ENCODE measurements at regions of chr14 and their contacts with region 1.

Region 1: GRCh38 chr14:54730156-54730961 is 163.4 kb downstream of the SAMD4A start:
- DNase-seq: peak; percentile 63
- H3K4me3 Mint-ChIP-seq: peak overlapping the region; percentile 38
- H3K27ac Mint-ChIP-seq: peak overlapping the region; percentile 90
- H3K4me1 Mint-ChIP-seq: peaks cover 38% of the 10 kb centered on the region
- H3K27me3 Mint-ChIP-seq: peaks cover 12% of the 10 kb centered on the region

Region 2: GRCh38 chr14:54627540-54628363 is 102.6 kb before region 1 on chr14:
- CTCF ChIA-PET with region 1: interaction called, 3 read pairs
- POLR2A ChIA-PET with region 1: no interaction called
- intact Hi-C with region 1: loop called (anchors 1 kb)
- DNase-seq: peak; percentile 49
- H3K4me3 Mint-ChIP-seq: peak overlapping the region; percentile 55
- H3K27ac Mint-ChIP-seq: peak overlapping the region; percentile 78
- H3K4me1 Mint-ChIP-seq: peaks cover 40% of the 10 kb centered on the region
- H3K27me3 Mint-ChIP-seq: no peaks in the 10 kb centered on the region

Region 3: DNA sequence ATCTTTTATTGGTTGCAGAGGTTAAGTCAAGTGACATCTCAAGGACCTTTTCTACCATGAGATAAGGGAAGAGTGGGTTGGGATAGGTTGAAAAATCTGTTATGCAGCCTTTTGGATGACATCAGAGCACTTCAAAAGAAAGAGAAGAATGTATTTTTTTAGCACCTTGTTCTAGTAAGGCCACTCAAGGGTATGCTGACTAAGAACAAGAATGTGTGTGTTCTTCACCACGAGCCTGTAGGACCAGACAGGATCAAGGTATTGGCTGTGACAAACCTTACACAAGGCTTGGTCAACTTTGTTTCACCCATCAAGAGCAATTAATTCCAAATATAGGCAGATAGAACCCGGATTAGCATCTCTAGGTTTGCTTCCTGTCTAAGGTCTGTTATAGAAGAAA is 20.9 kb before region 1 on chr14:
- CTCF ChIA-PET with region 1: interaction called, 4 read pairs
- POLR2A ChIA-PET with region 1: no interaction called
- intact Hi-C with region 1: loop called (anchors 2 kb)
- DNase-seq: no peak
- H3K4me3 Mint-ChIP-seq: no peak overlapping the region
- H3K27ac Mint-ChIP-seq: no peak overlapping the region
- H3K4me1 Mint-ChIP-seq: peaks cover 17% of the 10 kb centered on the region
- H3K27me3 Mint-ChIP-seq: no peaks in the 10 kb centered on the region

Region 4: GRCh38 chr14:54796961-54797360 is 66.6 kb after region 1 on chr14:
- CTCF ChIA-PET with region 1: no interaction called
- POLR2A ChIA-PET with region 1: no interaction called
- intact Hi-C with region 1: no loop called
- DNase-seq: no peak
- H3K4me3 Mint-ChIP-seq: no peak overlapping the region
- H3K27ac Mint-ChIP-seq: no peak overlapping the region
- H3K4me1 Mint-ChIP-seq: no peaks in the 10 kb centered on the region
- H3K27me3 Mint-ChIP-seq: peaks cover 5% of the 10 kb centered on the region